Activated CD8-positive, alpha-beta memory T cell treated with anti-CD3 and anti-CD28 coated beads, Interleukin-2, amount 10 ng/mL, durations not matched to agents 7 days and 5 days (primary cell): ENCODE measurements at regions of chr9 and their contacts with region 1.

Region 1: DNA sequence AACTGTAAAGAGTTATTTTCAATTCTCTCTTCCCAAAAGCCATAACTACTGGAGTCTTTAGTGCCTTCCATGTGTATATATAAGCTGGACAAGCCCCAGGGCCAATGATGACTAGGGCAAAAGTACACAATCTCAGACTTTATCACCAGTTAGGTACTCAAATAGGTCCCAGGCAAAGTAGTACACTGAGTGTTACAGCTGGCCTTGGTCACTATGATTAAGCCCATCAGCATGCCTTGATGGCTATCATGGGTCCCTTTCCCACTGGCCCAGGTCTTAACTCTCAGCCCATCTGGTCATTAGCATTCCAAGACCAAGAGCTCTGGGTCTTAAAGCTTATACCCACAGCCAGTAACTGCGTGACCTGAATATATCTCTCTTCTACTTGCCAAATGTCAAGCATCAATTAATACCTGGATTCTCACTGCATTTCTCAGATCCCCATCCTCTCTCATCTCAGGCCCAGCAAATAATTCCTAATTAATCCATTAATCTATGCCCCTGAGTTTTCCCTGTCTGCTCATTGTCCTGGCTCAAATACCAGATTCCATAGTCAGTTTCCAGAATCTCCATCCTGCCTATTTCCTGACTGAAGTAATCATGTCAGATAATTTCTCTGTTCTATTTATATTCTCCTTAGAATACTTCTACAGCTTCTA is 62.3 kb downstream of the NR6A1 start:
- DNase-seq: no peak
- ATAC-seq: no peak
- H3K4me3 Mint-ChIP-seq: no peak overlapping the region
- H3K27ac Mint-ChIP-seq: no peak overlapping the region
- H3K4me1 Mint-ChIP-seq: peaks cover 4% of the 10 kb centered on the region
- H3K27me3 Mint-ChIP-seq: peaks cover 19% of the 10 kb centered on the region

Region 2: DNA sequence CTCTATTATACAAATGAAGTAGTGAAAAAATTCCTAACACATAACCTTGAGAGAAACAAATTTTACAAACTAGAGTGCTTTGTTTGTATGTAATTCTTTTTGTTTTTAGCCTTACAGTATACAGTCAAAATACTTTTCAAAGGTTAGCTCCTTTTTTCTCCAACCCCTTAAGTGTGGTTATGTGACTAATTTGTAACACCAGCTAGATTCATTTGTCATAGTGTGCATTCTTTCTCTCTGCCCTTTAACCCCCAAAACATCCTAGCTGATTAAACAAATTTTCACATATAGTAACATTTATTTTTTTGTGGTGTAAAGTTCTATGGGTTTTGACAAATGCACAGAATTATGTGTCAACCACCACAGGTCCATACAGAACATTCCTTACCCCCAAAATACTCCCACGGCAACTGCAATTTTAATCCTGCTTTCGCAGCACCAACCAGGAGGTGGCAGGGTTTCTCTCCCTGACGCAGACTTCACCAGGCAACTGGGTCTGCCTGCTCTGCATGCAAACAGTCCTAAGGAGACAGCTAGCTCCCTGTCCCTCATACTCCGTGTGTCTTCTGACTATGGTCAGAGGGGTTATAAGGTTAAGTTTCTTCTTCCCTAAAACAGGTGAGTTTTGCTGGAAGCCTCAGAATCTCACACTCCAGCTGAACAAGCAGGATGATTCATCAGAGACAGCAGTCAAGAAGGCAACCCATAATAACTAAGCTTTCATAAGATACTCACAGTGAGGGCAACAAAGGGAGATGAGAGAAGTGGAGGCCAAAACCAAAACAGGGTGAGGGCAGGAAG is 157.1 kb before region 1 on chr9:
- CTCF ChIA-PET with region 1: interaction called, 15 read pairs
- DNase-seq: peak; percentile 60
- ATAC-seq: peak; percentile 73
- H3K4me3 Mint-ChIP-seq: no peak overlapping the region
- H3K27ac Mint-ChIP-seq: no peak overlapping the region
- H3K4me1 Mint-ChIP-seq: peaks cover 8% of the 10 kb centered on the region
- H3K27me3 Mint-ChIP-seq: peaks cover 14% of the 10 kb centered on the region

Region 3: GRCh38 chr9:124617471-124618141 is 91.2 kb before region 1 on chr9:
- CTCF ChIA-PET with region 1: interaction called, 63 read pairs
- DNase-seq: peak; percentile 80
- ATAC-seq: peak; percentile 85
- H3K4me3 Mint-ChIP-seq: no peak overlapping the region
- H3K27ac Mint-ChIP-seq: no peak overlapping the region
- H3K4me1 Mint-ChIP-seq: no peaks in the 10 kb centered on the region
- H3K27me3 Mint-ChIP-seq: peaks cover 15% of the 10 kb centered on the region

Region 4: GRCh38 chr9:124686918-124687317 is 21.8 kb before region 1 on chr9:
- CTCF ChIA-PET with region 1: no interaction called
- DNase-seq: no peak
- ATAC-seq: no peak
- H3K4me3 Mint-ChIP-seq: no peak overlapping the region
- H3K27ac Mint-ChIP-seq: no peak overlapping the region
- H3K4me1 Mint-ChIP-seq: no peaks in the 10 kb centered on the region
- H3K27me3 Mint-ChIP-seq: peaks cover 41% of the 10 kb centered on the region

Region 5: GRCh38 chr9:124725068-124725452 is 16.3 kb after region 1 on chr9:
- CTCF ChIA-PET with region 1: interaction called, 11 read pairs
- DNase-seq: no peak
- ATAC-seq: no peak
- H3K4me3 Mint-ChIP-seq: no peak overlapping the region
- H3K27ac Mint-ChIP-seq: no peak overlapping the region
- H3K4me1 Mint-ChIP-seq: no peaks in the 10 kb centered on the region
- H3K27me3 Mint-ChIP-seq: peaks cover 27% of the 10 kb centered on the region

Region 6: GRCh38 chr9:124894741-124895170 is 186.0 kb after region 1 on chr9:
- CTCF ChIA-PET with region 1: no interaction called
- DNase-seq: peak; percentile 66
- ATAC-seq: peak; percentile 83
- H3K4me3 Mint-ChIP-seq: no peak overlapping the region
- H3K27ac Mint-ChIP-seq: no peak overlapping the region
- H3K4me1 Mint-ChIP-seq: no peaks in the 10 kb centered on the region
- H3K27me3 Mint-ChIP-seq: no peaks in the 10 kb centered on the region